MCF 10A (cell line): ENCODE measurements at regions of chr9 and their contacts with region 1.

Region 1: GRCh38 chr9:110650991-110651411 is 17.6 kb upstream of the MUSK start:
- DNase-seq: peak; percentile 58
- H3K4me3 Mint-ChIP-seq: no peak overlapping the region
- H3K27ac Mint-ChIP-seq: peak overlapping the region; percentile 79
- H3K4me1 Mint-ChIP-seq: peaks cover 6% of the 10 kb centered on the region
- H3K27me3 Mint-ChIP-seq: no peaks in the 10 kb centered on the region
- CTCF ChIP-seq: no peak

Region 2: GRCh38 chr9:110835404-110835803 is 184.4 kb after region 1 on chr9:
- CTCF ChIA-PET with region 1: no interaction called
- POLR2A ChIA-PET with region 1: no interaction called
- intact Hi-C with region 1: loop called (anchors 10 kb)
- DNase-seq: peak; percentile 40
- H3K4me3 Mint-ChIP-seq: no peak overlapping the region
- H3K27ac Mint-ChIP-seq: no peak overlapping the region
- H3K4me1 Mint-ChIP-seq: peaks cover 16% of the 10 kb centered on the region
- H3K27me3 Mint-ChIP-seq: no peaks in the 10 kb centered on the region
- CTCF ChIP-seq: no peak